Activated naive CD4-positive, alpha-beta T cell treated with anti-CD3 and anti-CD28 coated beads for 36 hours (primary cell): ENCODE measurements at regions of chr20 and their contacts with region 1.

Region 1: GRCh38 chr20:44475694-44476560 is at the start of gene TTPAL:
- DNase-seq: peak; percentile 92
- H3K4me3 Mint-ChIP-seq: peak within 1 kb of the TSS; percentile 95
- H3K27ac Mint-ChIP-seq: peak within 1 kb of the TSS; percentile 96
- H3K4me1 Mint-ChIP-seq: peaks cover 20% of the 10 kb centered on the region
- H3K27me3 Mint-ChIP-seq: no peaks in the 10 kb centered on the region
- total RNA-seq, gene TTPAL: 10.8 to 11.5 TPM

Region 2: DNA sequence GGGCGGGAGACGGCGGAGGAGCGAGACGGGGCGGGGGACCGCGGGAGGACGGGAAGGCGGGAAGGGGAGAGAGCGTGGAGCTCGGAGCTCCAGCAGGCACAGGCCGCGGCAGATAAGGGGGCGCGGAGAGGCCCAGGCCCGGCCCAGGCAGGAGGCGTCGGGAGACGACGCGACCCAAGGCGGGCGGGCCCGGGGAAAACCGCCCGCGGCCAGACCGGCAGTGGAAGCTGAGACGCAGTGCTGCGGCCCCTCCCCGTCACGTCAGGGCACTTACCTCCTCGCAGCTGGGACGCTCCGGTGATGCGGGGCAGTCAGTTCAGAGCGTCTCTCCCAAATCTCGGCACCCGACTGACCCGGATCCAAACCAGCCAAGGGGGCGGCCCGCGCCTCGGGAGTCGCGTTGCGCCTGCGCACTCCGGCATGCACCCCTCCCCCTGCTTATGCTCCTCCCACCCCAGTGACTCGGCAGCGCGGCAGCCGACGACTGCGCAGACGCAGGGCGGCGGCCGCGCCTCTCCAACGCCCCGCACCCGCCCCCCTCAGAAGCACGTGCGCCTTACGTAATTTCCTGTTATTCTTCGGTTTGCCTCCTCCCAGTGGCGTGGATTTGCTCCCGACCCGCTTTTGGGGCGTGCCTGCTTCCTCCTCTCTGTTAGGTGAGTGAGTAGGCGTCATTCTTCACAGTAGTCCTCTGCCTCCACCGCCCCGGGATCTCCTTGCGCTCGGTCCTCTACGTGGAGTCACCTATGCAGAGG is 265.3 kb before region 1 on chr20 and contains the start of gene OSER1:
- CTCF ChIA-PET with region 1: interaction called, 3 read pairs
- intact Hi-C with region 1: loop called (anchors 1 kb)
- DNase-seq: peak; percentile 99
- H3K4me3 Mint-ChIP-seq: peak within 1 kb of the TSS; percentile 94
- H3K27ac Mint-ChIP-seq: peak within 1 kb of the TSS; percentile 92
- H3K4me1 Mint-ChIP-seq: peaks cover 61% of the 10 kb centered on the region
- H3K27me3 Mint-ChIP-seq: no peaks in the 10 kb centered on the region
- total RNA-seq, gene OSER1: 27.7 to 28.4 TPM

Region 3: DNA sequence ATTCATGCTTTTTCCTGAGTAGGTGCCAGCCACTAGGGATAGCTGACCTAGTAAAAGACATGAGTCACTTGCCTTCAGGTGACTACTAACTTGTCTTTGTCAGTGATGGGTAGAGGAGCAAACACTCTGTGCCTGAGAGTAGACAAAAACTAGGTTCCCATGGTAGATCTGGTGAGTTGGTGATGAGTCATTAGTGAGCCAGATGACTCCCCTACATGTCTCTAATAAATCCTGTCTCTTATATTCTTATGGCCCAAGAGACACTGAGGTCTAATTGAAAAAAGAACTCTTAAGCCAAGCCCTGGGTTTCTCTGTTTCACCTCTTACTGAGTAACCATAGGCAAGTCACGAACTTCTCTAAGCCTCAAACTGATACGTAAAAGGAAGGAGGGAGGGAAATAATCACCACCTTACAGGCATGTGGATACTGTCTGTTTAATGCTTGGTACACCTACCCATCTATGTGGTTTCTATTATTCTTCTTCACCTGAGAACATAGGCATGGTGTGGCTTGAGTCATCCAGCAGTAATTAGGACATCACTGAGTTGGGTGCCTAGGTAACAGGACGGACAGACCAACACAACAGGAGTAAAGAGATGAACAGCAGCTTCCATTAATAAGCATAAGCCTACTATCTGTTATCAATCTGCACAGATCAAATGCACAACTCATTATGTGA is 20.0 kb after region 1 on chr20:
- CTCF ChIA-PET with region 1: interaction called, 3 read pairs
- intact Hi-C with region 1: loop called (anchors 1 kb)
- DNase-seq: peak; percentile 31
- H3K4me3 Mint-ChIP-seq: no peak overlapping the region
- H3K27ac Mint-ChIP-seq: peak overlapping the region; percentile 82
- H3K4me1 Mint-ChIP-seq: peaks cover 39% of the 10 kb centered on the region
- H3K27me3 Mint-ChIP-seq: no peaks in the 10 kb centered on the region

Region 4: DNA sequence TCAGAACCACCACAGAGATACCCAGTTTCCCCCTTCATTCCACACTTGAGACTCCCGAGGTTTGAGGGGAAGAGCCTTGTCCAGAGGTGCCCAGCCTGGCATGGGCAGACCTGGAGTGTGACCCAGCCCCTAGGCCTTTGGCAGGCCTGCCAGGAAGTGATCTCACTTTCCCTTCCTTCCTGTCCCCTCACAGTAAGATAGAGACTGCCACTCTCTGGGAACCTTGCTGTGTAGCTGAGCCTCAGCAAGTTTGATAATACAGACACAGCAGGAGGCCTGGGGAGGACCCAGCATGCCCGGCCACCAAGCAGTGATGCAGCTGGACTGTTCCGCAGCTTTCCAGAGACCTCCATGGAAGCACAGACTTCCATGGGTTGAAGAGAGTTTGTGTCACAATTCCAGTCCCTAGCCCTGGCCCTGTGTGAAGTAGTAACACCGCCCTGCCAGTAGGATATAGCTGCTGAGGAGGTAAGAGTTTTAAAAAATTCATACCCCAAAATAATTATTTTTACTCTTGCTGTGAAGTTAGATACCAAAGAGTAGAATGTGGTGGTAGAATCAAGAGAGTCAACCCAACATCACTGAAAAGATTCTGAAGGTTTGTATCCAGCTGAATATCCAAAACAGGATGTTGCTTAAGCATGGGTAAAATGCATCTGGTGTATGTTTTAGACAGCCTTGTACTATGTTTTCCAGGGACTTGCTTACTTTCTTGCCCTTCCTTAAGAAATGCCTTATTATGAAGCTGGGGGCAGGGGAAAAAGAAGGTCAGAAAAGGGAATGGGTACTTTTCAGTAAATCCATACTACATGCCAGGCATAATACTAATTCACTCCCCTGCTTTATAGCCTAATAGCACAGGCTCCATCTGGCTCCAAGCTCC is 122.7 kb after region 1 on chr20:
- CTCF ChIA-PET with region 1: interaction called, 5 read pairs
- intact Hi-C with region 1: loop called (anchors 5 kb)
- DNase-seq: peak; percentile 61
- H3K4me3 Mint-ChIP-seq: peak overlapping the region; percentile 70
- H3K27ac Mint-ChIP-seq: peak overlapping the region; percentile 81
- H3K4me1 Mint-ChIP-seq: peaks cover 32% of the 10 kb centered on the region
- H3K27me3 Mint-ChIP-seq: no peaks in the 10 kb centered on the region

Region 5: GRCh38 chr20:44678242-44678641 is 202.3 kb after region 1 on chr20:
- CTCF ChIA-PET with region 1: no interaction called
- intact Hi-C with region 1: loop called (anchors 5 kb)
- DNase-seq: no peak
- H3K4me3 Mint-ChIP-seq: no peak overlapping the region
- H3K27ac Mint-ChIP-seq: no peak overlapping the region
- H3K4me1 Mint-ChIP-seq: no peaks in the 10 kb centered on the region
- H3K27me3 Mint-ChIP-seq: no peaks in the 10 kb centered on the region

Region 6: GRCh38 chr20:44909872-44910689 is 434.2 kb after region 1 on chr20 and contains the start of gene PABPC1L:
- CTCF ChIA-PET with region 1: no interaction called
- intact Hi-C with region 1: no loop called
- DNase-seq: peak; percentile 81
- H3K4me3 Mint-ChIP-seq: peak within 1 kb of the TSS; percentile 88
- H3K27ac Mint-ChIP-seq: peak within 1 kb of the TSS; percentile 66
- H3K4me1 Mint-ChIP-seq: peaks cover 35% of the 10 kb centered on the region
- H3K27me3 Mint-ChIP-seq: no peaks in the 10 kb centered on the region
- total RNA-seq, gene PABPC1L: 71.0 to 72.8 TPM